ENCODE measurements at regions of chr14 and their contacts with region 1.

Region 1: GRCh38 chr14:75158843-75159614 is 17.4 kb downstream of the TMED10 start:
- DNase-seq: no peak
- ATAC-seq: peak; percentile 30 to 67
- H3K4me3 ChIP-seq: no peak overlapping the region
- H3K27ac ChIP-seq: peak overlapping the region; percentile 49 to 71 (median 57)
- H3K4me1 ChIP-seq: peaks cover 23 to 34% of the 10 kb centered on the region in 2 donors
- H3K27me3 ChIP-seq: no peaks in the 10 kb centered on the region
- CTCF ChIP-seq: no peak
- POLR2A ChIP-seq: no peak

Region 2: DNA sequence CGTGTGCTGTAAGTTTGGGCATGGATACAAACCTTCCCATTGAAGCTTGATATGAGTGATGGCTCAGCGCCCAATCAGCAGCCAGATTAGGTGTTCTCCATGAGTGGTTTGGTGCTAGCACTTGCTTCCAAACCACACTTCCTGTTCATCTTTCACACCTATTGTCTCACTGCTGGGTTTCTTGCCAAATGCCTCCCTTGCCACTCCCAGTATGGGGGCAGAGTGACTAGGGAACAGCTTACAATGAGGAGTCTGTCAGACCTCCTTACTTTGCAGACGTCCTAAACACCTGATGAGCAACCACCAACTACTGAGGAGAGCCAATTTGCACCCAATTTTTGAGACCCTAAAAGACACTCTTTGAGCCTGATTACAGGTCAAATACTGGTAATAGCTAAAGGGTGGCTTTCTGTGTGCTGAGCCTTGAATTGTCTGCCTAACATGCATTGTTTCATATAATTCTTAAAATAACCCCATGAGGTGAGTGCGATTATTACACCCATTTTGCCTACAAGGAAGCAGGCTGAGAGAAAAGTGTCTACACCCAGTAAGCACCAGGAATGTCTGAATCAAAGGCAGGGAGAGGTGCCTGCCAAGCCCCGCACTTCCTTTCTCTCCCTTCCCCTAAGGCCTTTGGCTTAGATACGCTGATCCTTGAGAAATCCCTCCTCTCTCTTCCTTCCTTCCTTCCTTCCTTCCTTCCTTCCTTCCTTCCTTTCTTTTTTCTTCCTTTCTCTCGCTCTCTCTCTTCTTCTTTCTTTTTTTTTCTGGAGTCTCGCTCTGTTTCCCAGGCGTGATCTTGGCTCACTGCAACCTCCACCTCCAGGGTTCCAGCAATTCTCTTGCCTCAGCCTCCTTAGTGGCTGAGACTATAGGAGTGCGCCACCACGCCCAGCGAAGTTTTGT is 71.4 kb after region 1 on chr14:
- in situ Hi-C with region 1: loop called in 1 of 4 experiments (anchors 10 kb)
- intact Hi-C with region 1: no loop called
- DNase-seq: peak in 1 of 2 donors; percentile 88
- ATAC-seq: peak; percentile 35 to 86
- H3K4me3 ChIP-seq: no peak overlapping the region
- H3K27ac ChIP-seq: peak overlapping the region; percentile 60 to 77 (median 68)
- H3K4me1 ChIP-seq: peaks cover 18 to 20% of the 10 kb centered on the region in 2 donors
- H3K27me3 ChIP-seq: no peaks in the 10 kb centered on the region
- CTCF ChIP-seq: peak in 3 of 5 experiments; percentile 19 to 38 (median 28)
- POLR2A ChIP-seq: no peak